Colonic mucosa (tissue), 4 donors: ENCODE measurements at regions of chr1 and their contacts with region 1.

Region 1: DNA sequence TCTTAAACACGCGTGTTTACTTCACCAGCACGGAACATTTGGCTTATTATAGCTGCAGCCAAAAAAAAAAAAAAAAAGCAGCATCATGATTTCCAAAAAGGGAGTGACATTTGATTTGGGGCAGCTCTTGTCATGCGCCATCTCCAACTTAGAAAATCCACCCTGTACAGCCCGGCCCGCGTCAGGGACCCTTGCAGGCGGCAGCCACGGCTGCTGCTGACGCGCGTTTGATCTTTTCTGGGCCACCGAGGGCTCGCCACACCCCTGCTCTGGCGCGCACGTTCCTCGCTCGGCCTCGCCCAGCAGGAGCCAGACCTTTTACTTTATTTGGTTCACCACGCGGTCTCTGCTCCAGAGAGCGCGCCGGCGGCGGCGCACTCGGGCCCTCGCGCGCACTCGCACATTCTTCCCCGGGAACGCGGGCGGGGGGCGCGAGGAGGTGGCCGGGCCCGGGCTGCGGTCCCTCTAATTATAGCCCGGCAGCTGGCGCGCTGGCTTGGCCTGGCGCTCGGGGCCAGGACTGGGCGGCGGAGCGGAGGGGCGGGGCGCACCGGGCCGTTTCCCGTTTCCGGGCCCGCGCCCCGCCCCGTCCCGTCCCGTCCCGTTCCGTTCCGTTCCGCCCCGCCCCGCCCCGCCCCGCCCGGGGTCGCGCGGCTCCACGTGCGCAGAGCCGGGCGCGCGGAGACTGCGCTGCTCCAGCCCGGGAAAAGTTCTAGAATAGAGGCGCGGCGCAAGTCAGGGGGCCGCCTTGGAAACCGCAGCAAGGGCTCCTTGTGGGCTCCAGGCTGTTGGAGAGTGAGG is 10.2 kb downstream of the IRF2BP2 start:
- DNase-seq: peak; percentile 88
- H3K4me3 ChIP-seq: peak overlapping the region; percentile 41
- H3K27ac ChIP-seq: peak overlapping the region; percentile 99
- H3K4me1 ChIP-seq: peaks cover 18% of the 10 kb centered on the region
- H3K27me3 ChIP-seq: no peaks in the 10 kb centered on the region
- CTCF ChIP-seq: no peak

Region 2: DNA sequence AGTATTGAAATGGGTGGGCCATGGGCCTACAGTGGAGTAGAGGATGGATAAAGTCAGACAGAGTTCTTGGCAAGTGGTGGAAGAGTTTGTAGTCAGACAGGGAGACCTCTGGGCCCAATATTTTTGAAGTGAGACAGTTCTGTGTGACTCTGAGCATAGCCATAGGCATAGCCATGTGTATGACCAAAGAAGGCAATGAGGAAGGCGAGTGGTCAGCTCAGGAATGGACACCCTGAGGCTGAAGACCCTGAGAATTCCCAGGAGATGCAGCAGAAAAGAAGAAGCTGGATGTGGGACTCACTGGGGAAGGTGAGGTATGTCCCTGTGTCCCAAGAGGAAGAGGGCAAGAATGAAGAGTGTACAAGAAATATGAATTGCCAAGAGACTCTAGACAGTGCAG is 220.8 kb after region 1 on chr1:
- intact Hi-C with region 1: no loop called
- DNase-seq: no peak
- H3K4me3 ChIP-seq: no peak overlapping the region
- H3K27ac ChIP-seq: no peak overlapping the region
- H3K4me1 ChIP-seq: peaks cover 4% of the 10 kb centered on the region
- H3K27me3 ChIP-seq: no peaks in the 10 kb centered on the region
- CTCF ChIP-seq: no peak

Region 3: GRCh38 chr1:234963180-234963903 is 363.5 kb after region 1 on chr1:
- intact Hi-C with region 1: loop called (anchors 5 kb)
- DNase-seq: peak; percentile 91
- H3K4me3 ChIP-seq: no peak overlapping the region
- H3K27ac ChIP-seq: peak overlapping the region; percentile 98
- H3K4me1 ChIP-seq: peaks cover 36% of the 10 kb centered on the region
- H3K27me3 ChIP-seq: no peaks in the 10 kb centered on the region
- CTCF ChIP-seq: no peak